ENCODE measurements at regions of chr1 and their contacts with region 1.

Region 1: GRCh38 chr1:28775121-28775944 is 36.6 kb upstream of the OPRD1 start:
- DNase-seq: peak in 2 of 4 experiments; percentile 24 to 42
- ATAC-seq: peak; percentile 34; the same call in 1 of the 3 replicates
- H3K4me3 ChIP-seq: no peak overlapping the region
- H3K27ac ChIP-seq: no peak overlapping the region
- H3K4me1 ChIP-seq: peaks cover 0 to 5% of the 10 kb centered on the region in 2 experiments; a peak in 2 of 5 replicates
- H3K27me3 ChIP-seq: no peaks in the 10 kb centered on the region
- CTCF ChIP-seq: no peak
- EP300 ChIP-seq: no peak
- POLR2A ChIP-seq: no peak
- RAD21 ChIP-seq: no peak

Region 2: GRCh38 chr1:28756846-28757245 is 18.5 kb before region 1 on chr1:
- CTCF ChIA-PET with region 1: no interaction called
- POLR2A ChIA-PET with region 1: interaction called, 29 read pairs
- in situ Hi-C with region 1: no loop called
- intact Hi-C with region 1: no loop called
- DNase-seq: no peak
- ATAC-seq: peak; percentile 59
- H3K4me3 ChIP-seq: no peak overlapping the region
- H3K27ac ChIP-seq: no peak overlapping the region
- H3K4me1 ChIP-seq: peaks cover 5 to 12% of the 10 kb centered on the region in 2 experiments; a peak in 3 of 5 replicates
- H3K27me3 ChIP-seq: no peaks in the 10 kb centered on the region
- CTCF ChIP-seq: peak; percentile 24 to 51 (median 36); a peak in 4 of 6 replicates
- EP300 ChIP-seq: no peak
- POLR2A ChIP-seq: no peak
- RAD21 ChIP-seq: peak in 1 of 2 experiments; percentile 37; a peak in 1 of 4 replicates

Region 3: DNA sequence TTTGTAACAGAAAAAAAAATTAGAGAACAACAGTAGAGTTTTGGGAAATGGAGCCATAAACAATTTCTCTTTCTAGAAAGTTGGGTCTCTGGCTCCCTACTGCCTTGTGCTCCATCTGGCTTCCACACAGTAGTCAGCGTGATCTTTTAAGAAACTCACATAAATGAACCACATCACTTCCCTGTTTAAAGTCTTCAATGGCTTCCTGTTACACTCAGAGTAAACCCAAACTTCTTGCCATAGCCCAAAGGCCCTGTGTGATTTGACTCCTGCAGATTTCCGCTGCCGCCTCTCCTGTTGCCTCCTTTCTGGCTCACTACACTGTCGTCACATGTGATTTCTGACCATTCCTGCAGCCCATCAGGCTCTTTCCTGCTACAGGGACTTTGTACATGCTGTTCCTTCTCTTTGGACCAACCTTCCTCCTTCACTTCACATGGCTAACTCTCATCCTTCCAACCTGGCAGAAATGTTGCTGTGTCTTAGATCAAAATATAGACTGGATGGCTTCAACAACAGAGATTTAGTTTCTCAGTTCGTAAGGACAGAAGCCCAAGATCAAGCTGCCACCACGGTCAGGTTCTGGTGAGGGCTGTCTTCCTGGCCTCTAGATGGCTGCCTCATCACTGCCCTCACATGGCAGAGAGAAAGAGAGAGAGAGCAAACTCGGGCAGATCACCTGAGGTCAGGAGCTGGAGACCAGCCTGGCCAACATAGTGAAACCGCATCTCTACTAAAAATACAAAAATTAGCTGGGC is 70.6 kb after region 1 on chr1:
- CTCF ChIA-PET with region 1: no interaction called
- POLR2A ChIA-PET with region 1: interaction called, 3 read pairs
- in situ Hi-C with region 1: loop called (anchors 5 kb)
- intact Hi-C with region 1: no loop called
- DNase-seq: peak in 1 of 4 experiments; percentile 67
- ATAC-seq: peak; percentile 96
- H3K4me3 ChIP-seq: no peak overlapping the region
- H3K27ac ChIP-seq: no peak overlapping the region
- H3K4me1 ChIP-seq: no peaks in the 10 kb centered on the region
- H3K27me3 ChIP-seq: peaks cover 5 to 8% of the 10 kb centered on the region in 2 experiments; a peak in 3 of 5 replicates
- CTCF ChIP-seq: peak; percentile 53 to 64 (median 59)
- EP300 ChIP-seq: no peak
- POLR2A ChIP-seq: no peak
- RAD21 ChIP-seq: peak; percentile 42 to 71

Measured in K562 (cell line).